Aorta (tissue), 5 donors: ENCODE measurements at regions of chr12 and their contacts with region 1.

Region 1: GRCh38 chr12:50222275-50222795 is 55.2 kb upstream of the CERS5 start:
- DNase-seq: peak in 1 of 2 donors; percentile 61
- ATAC-seq: peak; percentile 90
- H3K4me3 ChIP-seq: peak overlapping the region; percentile 73 to 96
- H3K27ac ChIP-seq: peak overlapping the region; percentile 86 to 99
- H3K4me1 ChIP-seq: peaks cover 4 to 7% of the 10 kb centered on the region in 2 donors
- H3K27me3 ChIP-seq: no peaks in the 10 kb centered on the region

Region 2: DNA sequence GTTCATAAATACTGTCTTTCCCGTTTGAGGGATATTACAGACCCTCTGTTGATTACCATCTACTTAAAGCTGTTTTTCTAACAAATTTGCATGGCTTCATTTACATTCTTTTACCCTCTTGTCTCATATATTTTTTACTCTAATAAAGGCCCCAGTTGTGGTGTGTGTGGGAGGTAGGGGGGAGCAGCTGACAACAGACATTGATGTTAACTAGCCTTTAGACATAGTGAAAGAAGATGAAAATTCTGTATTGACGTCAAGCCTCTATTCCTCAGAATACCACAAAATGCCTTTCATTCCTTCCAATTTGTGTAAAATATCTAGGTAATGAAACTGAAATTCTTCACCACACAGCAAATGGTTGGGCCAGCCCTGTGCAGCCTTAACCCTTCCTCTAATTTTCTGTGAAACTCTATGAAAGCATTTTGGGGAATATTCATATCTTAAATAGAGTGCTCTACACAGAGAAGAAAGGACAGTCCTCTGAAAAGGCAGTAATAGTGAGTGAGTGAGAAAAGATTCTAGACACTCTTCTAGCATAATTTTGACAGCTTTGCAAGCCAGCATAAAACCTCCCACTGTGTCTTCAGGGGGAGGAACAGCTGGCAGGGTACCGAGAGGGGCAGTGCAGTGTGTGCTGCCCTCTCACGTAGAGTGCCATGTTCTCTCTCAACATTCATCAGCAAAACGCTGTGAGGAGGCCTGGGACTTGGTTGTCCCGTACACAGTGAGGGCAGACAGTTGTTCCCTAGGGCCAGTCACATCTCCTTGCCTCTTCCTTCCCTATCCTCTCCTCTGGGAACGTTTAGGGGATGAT is 35.0 kb before region 1 on chr12:
- intact Hi-C with region 1: loop called in 1 of 2 experiments (anchors 5 kb)
- DNase-seq: no peak
- ATAC-seq: peak; percentile 47
- H3K4me3 ChIP-seq: no peak overlapping the region
- H3K27ac ChIP-seq: peak overlapping the region; percentile 58 to 90
- H3K4me1 ChIP-seq: peaks cover 5 to 8% of the 10 kb centered on the region in 2 donors
- H3K27me3 ChIP-seq: no peaks in the 10 kb centered on the region

Region 3: GRCh38 chr12:50246873-50247612 is 24.7 kb after region 1 on chr12:
- intact Hi-C with region 1: loop called in 1 of 2 experiments (anchors 2 kb)
- DNase-seq: peak; percentile 91 to 93
- ATAC-seq: peak; percentile 83
- H3K4me3 ChIP-seq: no peak overlapping the region
- H3K27ac ChIP-seq: peak overlapping the region; percentile 70 to 89
- H3K4me1 ChIP-seq: peaks cover 7 to 10% of the 10 kb centered on the region in 2 donors
- H3K27me3 ChIP-seq: no peaks in the 10 kb centered on the region

Region 4: GRCh38 chr12:50283229-50283923 is 61.0 kb after region 1 on chr12 and contains the start of gene LIMA1:
- intact Hi-C with region 1: loop called (anchors 2 to 5 kb)
- DNase-seq: peak; percentile 93 to 97
- ATAC-seq: peak; percentile 99
- H3K4me3 ChIP-seq: peak within 1 kb of the TSS; percentile 67 to 81
- H3K27ac ChIP-seq: peak within 1 kb of the TSS in 1 of 2 donors; percentile 70
- H3K4me1 ChIP-seq: no peaks in the 10 kb centered on the region
- H3K27me3 ChIP-seq: no peaks in the 10 kb centered on the region
- total RNA-seq, gene LIMA1: 131 to 177 TPM

Region 5: GRCh38 chr12:50302686-50303085 is 80.4 kb after region 1 on chr12:
- intact Hi-C with region 1: loop called in 1 of 2 experiments (anchors 5 kb)
- DNase-seq: no peak
- ATAC-seq: no peak
- H3K4me3 ChIP-seq: no peak overlapping the region
- H3K27ac ChIP-seq: no peak overlapping the region
- H3K4me1 ChIP-seq: no peaks in the 10 kb centered on the region
- H3K27me3 ChIP-seq: no peaks in the 10 kb centered on the region

Region 6: GRCh38 chr12:50314629-50315312 is 92.4 kb after region 1 on chr12:
- intact Hi-C with region 1: loop called in 1 of 2 experiments (anchors 5 kb)
- DNase-seq: no peak
- ATAC-seq: no peak
- H3K4me3 ChIP-seq: no peak overlapping the region
- H3K27ac ChIP-seq: no peak overlapping the region
- H3K4me1 ChIP-seq: no peaks in the 10 kb centered on the region
- H3K27me3 ChIP-seq: no peaks in the 10 kb centered on the region